ENCODE measurements at regions of chr14 and their contacts with region 1.

Region 1: DNA sequence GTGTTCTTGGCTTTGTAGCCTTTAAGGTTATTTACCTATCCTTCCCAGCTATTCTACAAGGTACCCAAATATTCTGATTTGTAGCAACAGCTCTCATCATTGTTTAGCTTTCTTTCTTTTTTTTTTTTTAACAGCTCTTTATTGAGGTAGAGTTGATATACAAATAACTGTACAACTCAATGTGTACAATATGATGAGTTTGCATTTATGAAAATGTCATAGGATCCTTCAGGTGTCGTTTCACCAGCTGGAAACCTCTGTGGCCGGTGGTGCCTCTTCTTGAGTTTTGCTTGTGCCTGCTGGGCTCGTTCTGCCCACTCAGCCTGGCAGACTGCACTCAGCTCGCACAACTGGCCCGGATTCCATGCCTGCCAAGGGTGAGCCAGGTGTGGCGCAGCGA is 26.9 kb upstream of the TBPL2 start:
- DNase-seq: no peak
- H3K4me3 ChIP-seq: no peak overlapping the region
- H3K27ac ChIP-seq: no peak overlapping the region
- H3K4me1 ChIP-seq: no peaks in the 10 kb centered on the region
- H3K27me3 ChIP-seq: no peaks in the 10 kb centered on the region
- CTCF ChIP-seq: no peak

Region 2: DNA sequence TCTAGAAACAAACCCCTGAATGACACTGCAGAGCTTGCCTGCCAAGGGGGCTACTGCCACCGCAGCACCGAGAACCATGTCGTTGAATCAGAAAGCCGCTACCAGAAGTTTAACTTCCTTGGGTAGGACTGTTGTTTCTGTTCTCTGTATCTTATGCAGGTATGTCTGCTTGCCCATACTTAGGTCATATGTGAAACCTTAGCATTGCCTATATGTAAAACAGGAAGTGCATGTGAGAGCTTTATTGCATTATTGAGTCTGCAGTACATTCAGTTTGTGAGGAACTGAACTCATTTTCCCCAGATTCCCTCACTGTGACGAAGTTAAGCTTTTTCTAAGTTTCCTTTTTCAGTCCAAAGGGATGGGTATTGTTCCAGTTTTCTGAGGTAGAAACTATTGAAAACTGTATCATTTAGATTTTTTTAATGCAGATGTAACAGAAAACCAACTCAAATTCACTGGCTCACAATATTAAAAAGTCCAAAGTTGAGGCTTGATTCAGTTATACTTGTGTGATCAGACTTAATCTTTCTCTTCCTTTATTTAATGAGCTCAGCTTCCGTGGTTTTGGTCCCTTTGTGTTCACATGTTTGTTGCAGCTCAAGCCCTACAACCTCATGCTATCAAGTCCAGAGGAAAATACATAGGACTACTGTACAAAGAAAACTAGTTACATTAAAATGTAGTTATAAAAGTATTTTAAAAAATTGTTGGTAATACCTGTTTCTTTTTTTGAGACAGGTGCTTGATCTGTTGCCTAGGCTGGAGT is 189.2 kb before region 1 on chr14:
- intact Hi-C with region 1: no loop called
- DNase-seq: no peak
- H3K4me3 ChIP-seq: no peak overlapping the region
- H3K27ac ChIP-seq: peak overlapping the region; percentile 8
- H3K4me1 ChIP-seq: peaks cover 13% of the 10 kb centered on the region
- H3K27me3 ChIP-seq: no peaks in the 10 kb centered on the region
- CTCF ChIP-seq: no peak

Region 3: DNA sequence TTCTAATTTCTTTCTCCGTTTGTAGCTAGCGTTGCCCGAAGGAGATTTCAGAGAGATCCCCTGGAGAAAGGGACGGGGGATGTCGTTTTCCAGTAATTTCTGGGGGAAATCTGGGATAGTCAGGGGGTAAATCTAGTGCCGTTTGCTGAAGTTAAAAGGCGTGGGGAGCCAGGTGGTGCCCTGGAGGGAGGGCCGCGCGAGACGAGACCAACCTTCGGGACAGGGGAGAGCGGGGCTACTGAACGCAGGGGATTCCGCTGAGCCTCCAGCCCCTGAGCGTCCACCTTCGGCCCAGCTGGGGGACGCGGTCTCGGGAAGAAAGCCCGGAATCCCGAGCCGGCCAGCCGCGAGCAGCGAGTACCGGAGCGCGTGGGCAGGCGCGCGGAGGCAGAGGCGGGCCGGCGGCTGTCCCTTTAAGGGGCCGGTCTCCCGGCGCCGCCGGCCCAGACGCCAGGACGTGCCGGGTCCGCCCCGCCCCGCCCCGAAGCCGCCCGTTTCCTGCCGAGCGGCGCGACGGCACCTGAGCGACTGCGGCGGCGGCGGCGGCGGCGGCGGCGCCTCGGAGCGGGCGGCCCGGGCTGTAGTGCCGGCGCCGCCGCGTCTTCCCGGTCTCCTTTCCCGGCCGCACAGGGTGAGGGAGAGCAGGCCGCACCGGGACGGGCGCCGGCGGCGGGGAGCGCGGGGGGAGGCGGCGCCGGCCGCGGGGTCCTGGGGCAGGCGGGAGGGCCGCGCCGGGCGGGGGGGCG is 112.6 kb after region 1 on chr14 and contains the start of gene KTN1:
- intact Hi-C with region 1: loop called (anchors 10 kb)
- DNase-seq: peak; percentile 83
- H3K4me3 ChIP-seq: peak within 1 kb of the TSS; percentile 89
- H3K27ac ChIP-seq: peak within 1 kb of the TSS; percentile 85
- H3K4me1 ChIP-seq: no peaks in the 10 kb centered on the region
- H3K27me3 ChIP-seq: no peaks in the 10 kb centered on the region
- CTCF ChIP-seq: no peak
- total RNA-seq, gene KTN1: 149 to 264 TPM

Measured in colonic mucosa (tissue), 4 donors.